OCI-LY7 (cell line): ENCODE measurements at regions of chr10 and their contacts with region 1.

Region 1: GRCh38 chr10:12062754-12063482 is 5.8 kb upstream of the DHTKD1 start:
- DNase-seq: peak; percentile 52
- H3K4me3 ChIP-seq: peak overlapping the region; percentile 44
- H3K27ac ChIP-seq: peak overlapping the region; percentile 42
- H3K4me1 ChIP-seq: peaks cover 21% of the 10 kb centered on the region
- CTCF ChIP-seq: no peak

Region 2: DNA sequence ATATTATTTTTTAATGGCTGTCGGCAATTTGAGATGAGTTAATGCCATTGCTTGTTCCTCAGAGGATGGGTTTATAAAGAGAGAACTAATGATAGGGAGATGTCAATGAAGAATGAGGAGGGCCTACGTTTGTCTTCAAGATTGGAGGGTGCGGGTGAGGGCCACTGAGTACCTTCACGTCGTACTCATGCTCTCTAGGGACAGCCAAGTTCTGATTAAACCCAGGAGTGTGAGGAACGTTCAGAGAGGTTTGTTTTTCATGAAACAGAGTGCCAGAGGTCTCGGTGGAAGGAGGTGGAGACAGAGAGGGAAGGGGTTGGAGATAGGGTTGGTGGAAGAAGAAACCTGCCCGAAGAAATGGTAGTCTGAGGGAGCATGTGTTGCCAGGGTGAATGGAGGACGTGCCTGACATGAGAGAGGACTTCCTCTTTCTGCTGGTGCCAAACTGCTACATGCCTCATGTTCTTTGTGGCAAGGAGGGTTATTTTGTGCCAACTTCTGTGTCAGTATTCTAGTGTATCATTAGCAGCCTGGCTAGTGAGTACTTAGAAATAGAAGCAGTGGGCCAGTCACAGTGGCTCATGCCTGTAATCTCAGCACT is 14.8 kb after region 1 on chr10:
- CTCF ChIA-PET with region 1: no interaction called
- POLR2A ChIA-PET with region 1: interaction called, 12 read pairs
- intact Hi-C with region 1: no loop called
- DNase-seq: peak; percentile 65
- H3K4me3 ChIP-seq: peak overlapping the region; percentile 6
- H3K27ac ChIP-seq: peak overlapping the region; percentile 63
- H3K4me1 ChIP-seq: peaks cover 63% of the 10 kb centered on the region
- CTCF ChIP-seq: no peak